ENCODE measurements at regions of chr10 and their contacts with region 1.

Region 1: DNA sequence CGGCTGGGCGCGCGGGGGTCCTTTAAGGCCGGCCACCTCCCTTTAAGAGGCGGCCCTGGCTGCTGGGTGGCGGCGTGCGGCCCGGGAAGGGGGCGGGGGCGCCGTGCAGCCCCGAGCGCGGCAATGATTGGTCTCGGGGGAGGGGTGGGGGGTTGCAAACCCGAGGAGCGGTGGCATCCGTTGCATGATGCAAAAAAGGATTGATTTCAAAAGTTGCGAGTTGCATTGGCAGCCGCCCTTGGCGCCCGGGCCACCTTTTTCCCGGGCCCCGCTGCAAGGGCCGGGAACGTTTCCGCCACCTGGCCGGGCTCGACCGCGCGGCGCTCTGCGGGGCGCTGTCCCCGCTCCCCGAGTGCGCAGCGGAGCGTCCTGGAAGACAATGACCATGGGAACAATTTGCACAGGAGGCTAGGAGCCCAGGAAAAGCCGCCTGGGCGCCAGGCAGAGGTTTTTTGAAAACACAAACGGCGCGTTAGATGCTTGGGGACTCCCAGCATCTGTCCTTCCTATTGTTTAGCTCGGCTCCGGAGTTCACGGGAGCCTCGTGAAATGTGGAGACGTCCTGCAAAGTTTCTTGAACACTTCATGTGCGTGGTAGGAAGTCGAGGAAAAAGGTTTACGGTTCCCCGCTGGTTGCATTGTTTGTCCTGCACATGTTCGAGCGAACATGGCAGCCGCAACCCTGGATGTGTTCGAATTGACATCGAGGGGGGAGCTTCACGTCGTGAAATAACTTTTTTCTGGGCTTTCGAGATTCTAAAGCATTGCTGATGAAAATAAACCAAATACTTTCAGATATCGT is at the start of gene SEPHS1:
- DNase-seq: peak; percentile 77
- H3K4me3 Mint-ChIP-seq: peak within 1 kb of the TSS; percentile 91
- H3K27ac Mint-ChIP-seq: peak within 1 kb of the TSS; percentile 90
- H3K4me1 Mint-ChIP-seq: peaks cover 44% of the 10 kb centered on the region
- H3K27me3 Mint-ChIP-seq: peaks cover 2% of the 10 kb centered on the region
- total RNA-seq, gene SEPHS1: 54.4 and 56.7 TPM in 2 replicates

Region 2: DNA sequence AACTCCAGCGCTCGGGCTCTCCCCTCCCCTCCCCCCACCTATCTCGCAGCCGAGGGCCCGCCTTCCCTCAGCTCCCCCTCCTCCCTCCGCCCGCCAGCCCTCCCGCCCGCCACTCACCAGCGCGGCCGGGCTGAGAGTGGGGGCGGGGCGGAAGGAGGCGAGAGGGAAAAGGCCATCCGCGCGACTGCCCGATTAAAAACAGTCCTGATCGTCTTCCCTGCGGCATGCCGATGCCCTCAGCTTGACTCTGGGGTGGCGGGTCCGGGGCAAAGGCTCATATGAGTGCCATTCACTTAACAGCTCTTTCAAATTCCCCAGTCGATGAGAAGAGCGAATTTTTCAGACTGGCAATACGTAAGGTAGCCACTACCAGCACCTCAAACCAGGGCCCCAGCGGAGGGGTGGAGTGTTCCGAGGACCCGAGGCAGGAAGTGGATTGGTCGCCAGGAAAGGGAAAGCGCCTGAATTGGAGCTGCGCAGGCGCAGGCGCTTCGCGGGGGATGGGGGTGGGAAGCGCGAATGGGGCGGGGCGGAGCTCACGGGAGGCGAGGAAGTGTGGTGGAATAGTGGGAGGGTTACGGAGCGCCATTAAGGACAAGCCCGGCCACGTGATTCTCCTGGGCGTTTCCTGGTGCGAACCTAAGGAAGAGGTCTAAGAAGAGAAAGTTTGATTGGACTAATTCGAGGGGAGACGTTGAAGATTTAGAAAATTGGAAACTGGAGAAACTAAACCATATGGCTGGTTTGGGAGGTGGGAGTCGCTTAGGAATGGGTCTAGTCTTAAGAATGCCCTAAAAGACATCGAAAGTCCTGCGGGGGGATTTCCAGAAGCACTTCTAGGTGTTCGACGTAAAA is 1305.4 kb before region 1 on chr10 and contains the start of gene UPF2:
- intact Hi-C with region 1: loop called (anchors 2 kb)
- DNase-seq: peak; percentile 94
- H3K4me3 Mint-ChIP-seq: peak within 1 kb of the TSS; percentile 99
- H3K27ac Mint-ChIP-seq: peak within 1 kb of the TSS; percentile 99
- H3K4me1 Mint-ChIP-seq: peaks cover 34% of the 10 kb centered on the region
- H3K27me3 Mint-ChIP-seq: no peaks in the 10 kb centered on the region
- total RNA-seq, gene UPF2: 38.9 and 43.6 TPM in 2 replicates

Region 3: DNA sequence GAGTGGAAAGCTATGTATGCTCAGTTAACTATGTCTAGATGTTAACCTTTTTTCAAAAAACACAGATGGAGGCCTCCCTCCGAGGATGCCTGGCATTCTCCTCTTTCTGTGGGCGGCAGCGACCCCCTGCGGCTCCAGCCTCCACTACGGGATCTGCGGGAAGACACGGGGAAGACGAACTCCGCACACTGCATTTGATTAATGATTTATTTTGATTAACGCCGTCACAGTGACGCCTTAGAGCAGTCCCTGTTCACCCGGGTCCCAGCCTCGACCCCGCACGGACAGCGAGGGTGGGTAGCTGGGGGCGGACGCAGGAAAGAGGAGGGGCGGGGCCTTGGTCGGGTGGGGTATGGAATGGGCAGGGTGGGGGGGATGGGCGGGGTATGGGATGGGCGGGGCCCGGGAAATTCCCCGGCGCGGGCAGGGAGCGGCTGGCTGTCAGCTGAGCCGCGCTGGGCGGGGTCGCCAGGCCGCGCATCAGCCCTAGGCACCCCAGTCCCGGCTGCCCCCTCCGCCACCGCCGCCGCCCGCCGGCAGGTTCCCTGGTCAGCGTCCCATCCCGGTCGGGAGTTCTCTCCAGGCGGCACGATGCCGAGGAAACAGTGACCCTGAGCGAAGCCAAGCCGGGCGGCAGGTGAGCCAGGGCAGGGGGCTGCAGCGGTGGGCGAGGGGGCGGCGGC is 248.6 kb before region 1 on chr10 and contains the start of gene OPTN:
- intact Hi-C with region 1: loop called (anchors 2 kb)
- DNase-seq: peak; percentile 73
- H3K4me3 Mint-ChIP-seq: peak within 1 kb of the TSS; percentile 93
- H3K27ac Mint-ChIP-seq: peak within 1 kb of the TSS; percentile 92
- H3K4me1 Mint-ChIP-seq: peaks cover 55% of the 10 kb centered on the region
- H3K27me3 Mint-ChIP-seq: no peaks in the 10 kb centered on the region
- total RNA-seq, gene OPTN: 52.6 and 54.1 TPM in 2 replicates

Region 4: GRCh38 chr10:13302814-13303555 is 45.4 kb before region 1 on chr10:
- intact Hi-C with region 1: loop called (anchors 1 kb)
- DNase-seq: no peak
- H3K4me3 Mint-ChIP-seq: peak overlapping the region; percentile 82
- H3K27ac Mint-ChIP-seq: no peak overlapping the region
- H3K4me1 Mint-ChIP-seq: peaks cover 20% of the 10 kb centered on the region
- H3K27me3 Mint-ChIP-seq: no peaks in the 10 kb centered on the region

Region 5: DNA sequence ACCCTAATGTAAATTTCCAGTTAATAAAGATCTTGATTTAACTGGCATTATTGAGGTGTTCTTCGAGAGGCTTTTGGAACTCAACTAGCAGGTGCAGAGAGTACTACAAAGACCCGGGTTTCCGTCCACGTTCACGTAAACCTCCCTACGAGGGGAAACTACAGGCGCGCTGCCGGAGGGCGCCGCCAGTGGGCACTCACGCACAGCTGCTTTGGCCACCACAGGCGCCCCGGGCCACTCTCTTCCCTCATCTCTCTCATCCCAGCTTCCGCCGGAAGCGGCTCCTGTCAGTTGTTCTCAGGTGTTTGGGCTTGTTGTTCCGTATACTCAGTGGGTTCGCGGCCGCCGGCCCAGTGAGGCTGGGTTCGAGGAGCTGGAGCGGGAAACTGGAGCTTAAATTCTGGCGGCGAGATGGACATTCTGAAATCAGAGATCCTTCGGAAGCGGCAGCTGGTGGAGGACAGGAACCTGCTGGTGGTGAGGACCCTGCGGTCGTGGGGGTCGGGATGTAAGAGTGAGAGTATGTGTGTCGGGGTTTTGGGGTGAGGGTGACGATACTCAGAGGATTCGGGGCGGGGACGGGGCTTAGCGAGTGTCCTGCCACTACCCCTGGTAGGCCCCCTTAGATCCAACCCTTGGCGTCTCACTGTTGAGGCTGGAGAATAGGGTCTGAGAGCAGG is 238.4 kb after region 1 on chr10 and contains the start of gene PRPF18:
- intact Hi-C with region 1: loop called (anchors 1 kb)
- DNase-seq: peak; percentile 89
- H3K4me3 Mint-ChIP-seq: peak within 1 kb of the TSS; percentile 100
- H3K27ac Mint-ChIP-seq: peak within 1 kb of the TSS; percentile 98
- H3K4me1 Mint-ChIP-seq: peaks cover 16% of the 10 kb centered on the region
- H3K27me3 Mint-ChIP-seq: peaks cover 11% of the 10 kb centered on the region
- total RNA-seq, gene PRPF18: 24.8 and 25.6 TPM in 2 replicates

Region 6: DNA sequence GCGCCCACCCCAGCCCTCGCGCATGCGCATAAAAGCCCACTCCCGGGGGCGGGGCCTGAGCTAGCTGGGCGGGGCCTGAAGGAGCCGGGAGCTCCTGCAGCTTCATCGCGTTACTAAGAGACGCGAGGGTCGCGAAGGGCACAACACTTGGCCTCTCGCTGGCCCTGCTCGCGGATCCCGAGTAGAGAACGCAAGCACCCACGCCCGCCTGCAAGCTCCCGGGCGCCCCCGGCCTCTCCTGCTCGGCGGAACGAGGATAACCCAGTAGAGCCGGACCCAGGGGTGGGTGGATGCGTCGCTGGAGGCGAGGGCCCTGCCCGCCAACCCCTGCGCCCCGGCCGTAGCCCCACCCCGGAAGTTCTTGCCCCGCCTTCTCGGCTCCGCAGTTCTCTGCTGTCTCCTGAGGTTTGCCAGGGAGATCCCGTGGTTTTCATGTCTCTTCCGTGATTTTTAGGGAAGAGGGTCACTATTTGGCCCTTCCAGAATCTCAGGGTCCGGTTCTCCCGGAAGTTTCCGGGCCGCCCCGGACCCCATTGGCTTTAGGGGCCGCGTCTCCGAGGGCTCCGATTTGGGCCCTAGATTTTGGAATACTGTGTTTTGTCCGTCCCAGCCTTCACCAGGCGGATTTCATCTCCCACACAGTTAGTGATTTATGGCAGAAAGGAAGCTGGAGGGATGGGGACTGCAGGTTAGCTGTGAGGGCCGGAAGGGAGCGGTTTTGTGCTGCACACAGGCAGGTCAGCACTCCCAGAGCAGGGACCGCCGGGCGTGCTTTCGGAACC is 1611.0 kb after region 1 on chr10 and contains the start of gene MEIG1:
- intact Hi-C with region 1: loop called (anchors 10 kb)
- DNase-seq: peak; percentile 91
- H3K4me3 Mint-ChIP-seq: peak within 1 kb of the TSS; percentile 97
- H3K27ac Mint-ChIP-seq: peak within 1 kb of the TSS; percentile 95
- H3K4me1 Mint-ChIP-seq: peaks cover 22% of the 10 kb centered on the region
- H3K27me3 Mint-ChIP-seq: no peaks in the 10 kb centered on the region
- total RNA-seq, gene MEIG1: 0.44 TPM in 1 of 2 replicates, not detected in the other